Sigmoid colon (tissue), 7 donors: ENCODE measurements at regions of chr19 and their contacts with region 1.

Region 1: GRCh38 chr19:53195265-53195903 is 2.2 kb upstream of the ZNF665 start:
- DNase-seq: peak; percentile 87
- H3K4me3 ChIP-seq: no peak overlapping the region
- H3K27ac ChIP-seq: peak overlapping the region; percentile 36 to 84 (median 40)
- H3K4me1 ChIP-seq: peaks cover 0 to 22% (median 14%) of the 10 kb centered on the region in 4 donors
- H3K27me3 ChIP-seq: no peaks in the 10 kb centered on the region
- CTCF ChIP-seq: peak; percentile 89 to 92 (median 92)
- EP300 ChIP-seq: no peak
- POLR2A ChIP-seq: no peak

Region 2: DNA sequence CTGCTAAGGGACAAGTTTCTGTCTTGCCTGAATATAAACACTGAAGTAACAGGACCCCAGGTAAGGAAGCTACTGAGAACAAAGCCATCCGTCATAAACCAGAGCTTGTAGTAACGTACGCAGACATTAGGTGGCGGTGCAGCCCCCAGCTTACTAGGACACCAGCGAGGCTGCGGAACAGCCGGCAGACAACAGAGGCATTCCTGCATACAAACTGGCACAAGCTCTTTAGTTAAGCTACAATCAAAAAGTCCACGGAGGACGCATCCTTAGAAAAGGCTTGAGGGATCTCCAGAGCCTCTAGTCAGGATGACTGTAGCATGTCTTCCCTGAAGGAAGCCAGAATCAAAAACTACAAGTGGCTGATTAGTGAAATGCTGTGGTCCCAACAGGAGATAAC is 118.4 kb before region 1 on chr19:
- intact Hi-C with region 1: loop called (anchors 10 kb)
- DNase-seq: peak; percentile 64
- H3K4me3 ChIP-seq: no peak overlapping the region
- H3K27ac ChIP-seq: no peak overlapping the region
- H3K4me1 ChIP-seq: peaks cover 0 to 8% (median 2%) of the 10 kb centered on the region in 4 donors
- H3K27me3 ChIP-seq: no peaks in the 10 kb centered on the region
- CTCF ChIP-seq: peak in 3 of 4 experiments; percentile 17 to 74 (median 39)
- EP300 ChIP-seq: no peak
- POLR2A ChIP-seq: no peak

Region 3: GRCh38 chr19:53112286-53112685 is 83.1 kb before region 1 on chr19:
- intact Hi-C with region 1: no loop called
- DNase-seq: no peak
- H3K4me3 ChIP-seq: no peak overlapping the region
- H3K27ac ChIP-seq: no peak overlapping the region
- H3K4me1 ChIP-seq: no peaks in the 10 kb centered on the region
- H3K27me3 ChIP-seq: no peaks in the 10 kb centered on the region
- CTCF ChIP-seq: no peak
- EP300 ChIP-seq: no peak
- POLR2A ChIP-seq: no peak

Region 4: GRCh38 chr19:53254411-53255341 is 59.3 kb after region 1 on chr19 and contains the start of gene ZNF677:
- intact Hi-C with region 1: loop called (anchors 1 kb)
- DNase-seq: peak; percentile 96
- H3K4me3 ChIP-seq: peak within 1 kb of the TSS; percentile 74 to 84 (median 75)
- H3K27ac ChIP-seq: peak within 1 kb of the TSS; percentile 78 to 86 (median 82)
- H3K4me1 ChIP-seq: peaks cover 0 to 15% (median 10%) of the 10 kb centered on the region in 4 donors
- H3K27me3 ChIP-seq: no peaks in the 10 kb centered on the region
- CTCF ChIP-seq: no peak
- EP300 ChIP-seq: no peak
- POLR2A ChIP-seq: peak in 1 of 2 donors; percentile 58
- total RNA-seq, gene ZNF677: 15.8 to 28.5 (median 20.5) TPM

Region 5: GRCh38 chr19:53365134-53365898 is 169.9 kb after region 1 on chr19 and contains the start of gene ZNF525:
- intact Hi-C with region 1: loop called (anchors 5 kb)
- DNase-seq: peak; percentile 94
- H3K4me3 ChIP-seq: peak within 1 kb of the TSS; percentile 59 to 74 (median 67)
- H3K27ac ChIP-seq: peak within 1 kb of the TSS; percentile 71 to 84 (median 76)
- H3K4me1 ChIP-seq: peaks cover 0 to 13% (median 3%) of the 10 kb centered on the region in 4 donors
- H3K27me3 ChIP-seq: no peaks in the 10 kb centered on the region
- CTCF ChIP-seq: peak in 1 of 4 experiments; percentile 16
- EP300 ChIP-seq: no peak
- POLR2A ChIP-seq: peak; percentile 16 to 53
- total RNA-seq, gene ZNF525: 6.3 to 8.3 (median 7.0) TPM

Region 6: GRCh38 chr19:53467485-53468262 is 272.3 kb after region 1 on chr19 and contains the start of gene ZNF813:
- intact Hi-C with region 1: loop called (anchors 5 kb)
- DNase-seq: peak; percentile 97
- H3K4me3 ChIP-seq: peak within 1 kb of the TSS; percentile 71 to 80 (median 74)
- H3K27ac ChIP-seq: peak within 1 kb of the TSS; percentile 74 to 79 (median 75)
- H3K4me1 ChIP-seq: peaks cover 0 to 15% (median 13%) of the 10 kb centered on the region in 4 donors
- H3K27me3 ChIP-seq: peaks cover 0 to 27% (median 0%) of the 10 kb centered on the region in 3 donors
- CTCF ChIP-seq: no peak
- EP300 ChIP-seq: no peak
- POLR2A ChIP-seq: no peak
- total RNA-seq, gene ZNF813: 2.9 to 4.2 (median 3.4) TPM

Region 7: DNA sequence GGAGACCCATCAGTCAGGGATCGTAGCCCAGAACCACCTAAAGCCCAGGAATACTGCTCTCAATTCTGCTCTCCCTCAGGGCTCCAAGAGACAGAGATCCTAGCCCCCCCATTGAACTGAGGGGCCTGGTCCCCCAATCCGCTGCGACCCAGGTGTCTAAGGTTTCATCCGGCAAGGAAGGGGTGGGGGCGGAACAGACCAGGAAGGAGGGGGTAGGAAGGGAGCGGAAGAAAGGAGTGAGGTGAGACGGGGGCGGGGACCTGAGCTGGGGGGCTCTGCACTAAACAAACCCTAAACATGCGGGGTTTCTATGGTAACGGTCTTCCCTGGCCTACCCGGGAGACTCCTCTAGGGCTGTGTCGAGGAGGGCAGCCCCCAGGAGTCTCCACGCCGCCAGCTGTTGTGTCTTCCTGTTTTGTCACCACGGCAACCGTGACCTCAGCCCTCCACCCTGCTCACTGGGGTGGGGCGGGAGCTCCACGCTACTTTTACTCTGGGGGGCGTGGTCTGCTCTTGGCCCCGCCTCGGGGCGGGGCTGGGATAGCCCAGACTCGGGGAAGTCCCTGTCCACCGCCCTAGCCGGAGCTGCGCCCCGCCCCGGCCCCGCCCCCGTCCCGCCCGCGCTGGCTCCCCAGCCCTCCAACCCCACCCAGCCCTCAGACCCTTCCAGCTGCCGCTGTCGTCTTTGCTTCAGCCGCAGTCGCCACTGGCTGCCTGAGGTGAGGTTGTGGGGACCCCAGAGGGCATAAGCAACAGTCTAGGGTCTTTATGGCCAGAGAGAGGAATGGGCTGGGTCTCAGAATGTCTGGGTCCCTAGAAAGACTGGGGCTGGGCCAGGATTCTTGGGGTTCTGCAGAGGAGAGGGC is 672.1 kb after region 1 on chr19 and contains the start of gene MYADM:
- intact Hi-C with region 1: loop called (anchors 10 kb)
- DNase-seq: peak; percentile 100
- H3K4me3 ChIP-seq: peak within 1 kb of the TSS; percentile 79 to 94 (median 92)
- H3K27ac ChIP-seq: peak within 1 kb of the TSS; percentile 94 to 98 (median 96)
- H3K4me1 ChIP-seq: peaks cover 0 to 51% (median 45%) of the 10 kb centered on the region in 4 donors
- H3K27me3 ChIP-seq: no peaks in the 10 kb centered on the region
- CTCF ChIP-seq: no peak
- EP300 ChIP-seq: peak in 2 of 4 donors; percentile 39 to 69
- POLR2A ChIP-seq: peak; percentile 86 to 96
- total RNA-seq, gene MYADM: 65.5 to 189 (median 97.3) TPM